ENCODE measurements at regions of chr3 and their contacts with region 1.

Region 1: GRCh38 chr3:38496131-38496910 is at the start of gene EXOG:
- DNase-seq: peak; percentile 93 to 98
- ATAC-seq: peak; percentile 96 to 99
- H3K4me3 ChIP-seq: peak within 1 kb of the TSS; percentile 64
- H3K27ac ChIP-seq: peak within 1 kb of the TSS; percentile 79 to 87
- H3K4me1 ChIP-seq: peaks cover 6% of the 10 kb centered on the region; the same call in 1 of the 3 replicates
- CTCF ChIP-seq: peak; percentile 79
- EP300 ChIP-seq: no peak
- POLR2A ChIP-seq: peak; percentile 54
- RAD21 ChIP-seq: peak; percentile 55 to 70
- polyA plus RNA-seq, gene EXOG: 16.6 and 17.1 TPM in 2 replicates

Region 2: DNA sequence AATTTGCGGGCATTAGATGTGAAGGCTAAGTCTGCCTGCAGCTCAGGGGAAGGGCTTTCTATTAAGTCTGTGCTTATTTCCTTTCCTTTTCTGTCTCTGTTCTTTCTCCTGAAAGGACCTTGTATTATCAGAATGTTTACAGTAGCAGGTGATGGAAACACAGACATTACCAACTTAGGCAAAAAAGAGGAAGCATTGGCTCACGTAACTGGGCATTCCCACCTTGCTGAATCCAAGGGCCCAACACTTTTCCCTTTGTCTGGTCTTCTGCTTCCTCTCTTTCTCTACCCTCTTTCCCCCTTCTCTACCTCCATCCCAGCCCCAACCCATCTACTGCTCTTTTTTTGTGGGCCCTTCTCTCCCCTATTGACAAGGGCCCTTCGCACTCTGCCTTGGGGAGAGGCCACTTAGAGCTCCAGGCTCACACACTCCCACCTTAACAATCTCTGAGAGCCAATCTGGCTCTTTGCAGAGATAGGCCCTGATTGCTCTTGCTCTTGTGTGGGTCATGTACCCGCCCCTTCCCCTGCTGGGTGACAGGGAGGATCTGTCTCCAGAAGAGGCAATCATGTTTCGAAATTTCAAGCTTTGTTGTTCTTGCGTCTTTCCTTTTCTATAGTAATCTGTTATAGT is 394.4 kb before region 1 on chr3:
- CTCF ChIA-PET with region 1: no interaction called
- POLR2A ChIA-PET with region 1: no interaction called
- DNase-seq: no peak
- ATAC-seq: no peak
- H3K4me3 ChIP-seq: no peak overlapping the region
- H3K27ac ChIP-seq: no peak overlapping the region
- H3K4me1 ChIP-seq: no peaks in the 10 kb centered on the region
- CTCF ChIP-seq: no peak
- EP300 ChIP-seq: no peak
- POLR2A ChIP-seq: no peak
- RAD21 ChIP-seq: no peak

Region 3: DNA sequence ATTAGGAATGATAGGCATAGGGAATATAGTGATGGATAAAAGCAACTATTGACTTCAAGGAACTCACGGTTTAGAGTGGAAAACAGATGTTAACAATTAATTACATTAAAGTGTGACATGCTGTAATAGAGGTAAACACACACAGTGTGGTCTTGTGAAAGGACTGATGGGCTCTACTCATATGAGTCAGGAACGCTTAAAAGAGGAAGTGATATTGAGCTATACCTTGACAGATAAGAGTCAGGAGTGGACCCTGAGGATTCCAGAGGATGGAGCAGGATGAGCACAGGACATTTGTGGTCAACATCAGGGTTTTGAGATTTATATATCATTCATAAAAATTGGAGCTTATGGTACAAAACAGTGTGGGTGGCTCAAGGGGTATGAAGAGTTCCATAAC is 10.8 kb after region 1 on chr3:
- CTCF ChIA-PET with region 1: interaction called, 12 read pairs
- POLR2A ChIA-PET with region 1: no interaction called
- DNase-seq: no peak
- ATAC-seq: no peak
- H3K4me3 ChIP-seq: no peak overlapping the region
- H3K27ac ChIP-seq: no peak overlapping the region
- H3K4me1 ChIP-seq: no peaks in the 10 kb centered on the region
- CTCF ChIP-seq: no peak
- EP300 ChIP-seq: no peak
- POLR2A ChIP-seq: no peak
- RAD21 ChIP-seq: no peak

Measured in A549 (cell line).